Right ventricle myocardium inferior (tissue), 1 donor: ENCODE measurements at regions of chr20 and their contacts with region 1.

Region 1: GRCh38 chr20:52379723-52380336 is 188.3 kb upstream of the ZFP64 start:
- DNase-seq: peak; percentile 72
- ATAC-seq: no peak

Region 2: DNA sequence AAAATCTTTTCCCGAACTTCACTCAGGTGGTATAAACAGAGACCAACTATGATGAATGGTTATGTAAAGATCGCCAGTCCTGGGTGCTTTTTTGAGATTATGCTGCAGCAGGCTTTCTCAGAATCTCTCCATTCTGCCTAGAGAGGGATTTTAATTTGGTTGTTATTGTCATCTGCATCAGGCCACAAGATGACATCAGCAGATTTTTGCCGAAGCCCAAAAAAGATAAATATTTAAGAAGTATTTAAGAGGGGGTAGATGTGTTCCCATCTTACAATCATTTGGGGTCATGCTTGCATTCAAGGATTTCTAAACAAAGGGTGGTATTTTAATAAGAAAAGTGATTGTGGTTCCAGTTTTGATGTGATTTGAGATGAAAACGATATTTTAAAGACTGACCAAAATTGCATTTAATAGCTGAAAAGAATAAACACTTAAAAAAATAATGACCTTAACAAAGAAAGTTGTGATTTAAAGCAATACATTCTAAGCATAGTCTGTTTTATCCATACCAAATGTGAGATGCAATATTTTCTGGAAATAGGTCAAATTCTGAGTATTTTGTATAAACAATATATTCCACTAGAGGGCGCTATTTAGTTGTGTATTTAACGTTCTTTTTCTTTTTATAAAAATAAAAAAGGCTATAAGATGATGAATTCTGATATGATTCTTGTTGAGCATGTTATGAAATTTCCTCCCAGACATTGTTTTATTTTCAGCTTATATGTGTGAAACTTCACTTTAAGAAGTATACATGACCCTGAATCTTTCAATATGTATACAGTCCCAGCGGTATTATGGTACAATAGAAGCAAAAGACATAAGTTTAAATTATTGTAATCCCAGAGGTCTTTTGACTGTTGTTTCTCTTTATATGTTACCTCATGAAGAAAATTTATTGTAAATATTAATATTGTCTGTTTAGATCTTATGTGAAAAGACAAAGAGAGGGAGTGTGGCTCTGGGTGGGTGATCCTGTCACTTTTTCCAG is 137.3 kb before region 1 on chr20:
- intact Hi-C with region 1: loop called (anchors 10 kb)
- DNase-seq: no peak
- ATAC-seq: no peak